ENCODE measurements at regions of chr17 and their contacts with region 1.

Region 1: DNA sequence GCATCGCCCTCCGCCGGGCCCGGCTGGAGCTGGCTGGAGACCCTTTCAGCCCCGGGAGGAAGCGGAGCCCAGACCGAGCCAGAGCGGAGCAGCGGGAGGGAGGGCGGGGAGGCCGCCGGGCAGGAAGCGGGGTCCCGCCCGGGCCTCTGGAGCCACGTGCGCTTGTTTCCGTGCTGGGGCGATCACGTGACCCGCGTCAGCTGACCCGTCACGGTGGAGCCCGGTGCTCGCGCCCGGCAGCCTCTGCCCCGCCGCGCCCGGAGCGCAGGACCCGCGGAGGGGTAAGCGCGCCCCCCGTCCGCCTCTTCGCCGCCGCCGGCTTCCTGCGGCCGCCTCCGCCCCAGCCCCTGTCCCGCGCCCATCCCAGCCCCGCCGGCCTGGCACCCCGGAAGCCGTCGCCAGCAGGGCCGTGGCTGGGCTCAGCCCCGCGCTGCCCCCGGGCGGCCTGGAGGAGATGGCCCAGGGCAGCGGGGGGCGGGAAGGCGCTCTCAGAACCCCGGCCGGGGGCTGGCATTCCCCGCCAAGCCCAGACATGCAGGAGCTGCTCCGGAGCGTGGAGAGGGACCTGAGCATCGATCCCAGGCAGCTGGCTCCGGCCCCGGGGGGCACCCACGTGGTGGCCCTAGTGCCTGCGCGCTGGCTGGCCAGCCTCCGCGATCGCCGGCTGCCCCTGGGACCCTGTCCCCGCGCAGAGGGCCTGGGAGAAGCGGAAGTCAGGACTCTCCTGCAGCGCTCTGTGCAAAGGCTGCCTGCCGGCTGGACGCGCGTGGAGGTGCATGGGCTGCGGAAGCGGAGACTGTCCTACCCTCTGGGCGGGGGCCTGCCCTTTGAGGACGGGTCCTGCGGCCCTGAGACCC is at the start of gene WDR81:
- DNase-seq: peak; percentile 53 to 85
- H3K4me3 ChIP-seq: peak within 1 kb of the TSS; percentile 93
- H3K27ac ChIP-seq: 0 out of 2 replicates have a peak within 1 kb of the TSS, but pooled peaks have one; percentile 38
- H3K4me1 ChIP-seq: peaks cover 5% of the 10 kb centered on the region; the same call in 1 of the 2 replicates
- H3K27me3 ChIP-seq: no peaks in the 10 kb centered on the region
- CTCF ChIP-seq: no peak
- total RNA-seq, gene WDR81: 20.2 and 20.5 TPM in 2 replicates

Region 2: GRCh38 chr17:1703063-1703462 is 21.7 kb before region 1 on chr17:
- CTCF ChIA-PET with region 1: no interaction called
- POLR2A ChIA-PET with region 1: no interaction called
- intact Hi-C with region 1: no loop called
- DNase-seq: no peak
- H3K4me3 ChIP-seq: no peak overlapping the region
- H3K27ac ChIP-seq: no peak overlapping the region
- H3K4me1 ChIP-seq: no peaks in the 10 kb centered on the region
- H3K27me3 ChIP-seq: no peaks in the 10 kb centered on the region
- CTCF ChIP-seq: no peak

Region 3: GRCh38 chr17:1764284-1764683 is 39.5 kb after region 1 on chr17:
- CTCF ChIA-PET with region 1: no interaction called
- POLR2A ChIA-PET with region 1: interaction called, 14 read pairs
- intact Hi-C with region 1: no loop called
- DNase-seq: no peak
- H3K4me3 ChIP-seq: no peak overlapping the region
- H3K27ac ChIP-seq: no peak overlapping the region
- H3K4me1 ChIP-seq: no peaks in the 10 kb centered on the region
- H3K27me3 ChIP-seq: no peaks in the 10 kb centered on the region
- CTCF ChIP-seq: no peak

Region 4: GRCh38 chr17:1783834-1784611 is 59.3 kb after region 1 on chr17:
- CTCF ChIA-PET with region 1: interaction called, 11 read pairs
- POLR2A ChIA-PET with region 1: no interaction called
- intact Hi-C with region 1: loop called (anchors 1 kb)
- DNase-seq: no peak
- H3K4me3 ChIP-seq: no peak overlapping the region
- H3K27ac ChIP-seq: no peak overlapping the region
- H3K4me1 ChIP-seq: peaks cover 10% of the 10 kb centered on the region
- H3K27me3 ChIP-seq: no peaks in the 10 kb centered on the region
- CTCF ChIP-seq: peak; percentile 79

Measured in PC-9 (cell line).